ENCODE measurements at regions of chr7 and their contacts with region 1.

Region 1: DNA sequence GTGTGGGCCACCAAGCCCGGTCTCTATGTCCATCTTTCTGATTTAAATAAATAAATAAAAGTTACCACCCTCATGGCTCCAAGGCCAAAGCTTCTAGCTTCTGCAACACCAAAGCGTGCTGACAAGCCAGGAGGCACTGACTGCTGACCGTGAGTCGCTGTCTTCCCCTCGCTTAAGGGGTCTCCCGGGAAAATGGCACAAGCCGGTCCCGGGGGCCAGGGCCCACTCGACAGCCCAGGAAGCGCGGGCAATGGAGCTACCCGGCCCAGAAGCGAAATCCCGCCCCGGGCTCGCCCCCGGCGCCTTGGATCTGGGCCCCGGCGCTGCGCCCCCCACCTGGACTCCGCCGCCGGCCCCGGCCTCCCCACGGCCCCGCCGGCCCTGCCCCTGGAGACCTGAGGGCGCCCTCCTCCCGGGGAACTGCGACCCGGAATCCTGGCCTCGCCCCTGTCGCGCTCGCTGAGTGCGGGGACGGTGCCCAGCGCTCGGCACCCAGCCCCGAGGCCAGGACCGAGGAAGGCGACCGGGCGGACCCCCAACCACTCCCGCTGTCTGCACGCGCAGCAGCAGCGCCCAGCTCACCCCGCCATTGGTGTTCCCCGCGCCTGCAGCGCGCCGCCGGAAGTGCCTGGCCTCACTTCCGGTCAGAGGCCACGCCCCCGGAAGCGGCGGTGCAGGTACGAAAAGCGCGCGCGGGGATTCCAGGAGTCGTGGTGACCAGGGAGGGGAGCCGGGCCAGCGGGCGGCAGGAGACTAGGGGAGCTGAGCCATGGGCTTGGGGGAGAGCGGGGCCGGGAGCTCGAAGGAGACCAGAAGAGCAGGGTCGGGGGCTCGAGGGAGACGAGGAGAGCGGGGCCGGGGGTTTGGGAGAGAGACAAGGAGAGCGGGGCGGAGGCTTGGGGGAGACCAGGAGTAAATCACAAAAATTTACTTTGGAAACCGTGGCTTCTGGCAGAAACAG is at the starts of genes MRM2 and NUDT1:
- DNase-seq: peak; percentile 97
- H3K4me3 Mint-ChIP-seq: peak within 1 kb of the TSS; percentile 95
- H3K27ac Mint-ChIP-seq: peak within 1 kb of the TSS; percentile 71
- H3K4me1 Mint-ChIP-seq: peaks cover 8% of the 10 kb centered on the region
- H3K27me3 Mint-ChIP-seq: no peaks in the 10 kb centered on the region
- CTCF ChIP-seq: no peak
- total RNA-seq, gene MRM2: 60.1 and 64.3 TPM in 2 replicates
- total RNA-seq, gene NUDT1: 52.2 and 65.6 TPM in 2 replicates

Region 2: GRCh38 chr7:2104107-2104710 is 137.7 kb before region 1 on chr7:
- CTCF ChIA-PET with region 1: no interaction called
- intact Hi-C with region 1: no loop called
- DNase-seq: no peak
- H3K4me3 Mint-ChIP-seq: no peak overlapping the region
- H3K27ac Mint-ChIP-seq: no peak overlapping the region
- H3K4me1 Mint-ChIP-seq: no peaks in the 10 kb centered on the region
- H3K27me3 Mint-ChIP-seq: no peaks in the 10 kb centered on the region
- CTCF ChIP-seq: peak; percentile 26

Region 3: GRCh38 chr7:2195400-2196246 is 46.2 kb before region 1 on chr7:
- CTCF ChIA-PET with region 1: no interaction called
- intact Hi-C with region 1: no loop called
- DNase-seq: no peak
- H3K4me3 Mint-ChIP-seq: no peak overlapping the region
- H3K27ac Mint-ChIP-seq: no peak overlapping the region
- H3K4me1 Mint-ChIP-seq: no peaks in the 10 kb centered on the region
- H3K27me3 Mint-ChIP-seq: no peaks in the 10 kb centered on the region
- CTCF ChIP-seq: no peak

Region 4: GRCh38 chr7:2393706-2394105 is 151.8 kb after region 1 on chr7:
- CTCF ChIA-PET with region 1: no interaction called
- intact Hi-C with region 1: no loop called
- DNase-seq: no peak
- H3K4me3 Mint-ChIP-seq: no peak overlapping the region
- H3K27ac Mint-ChIP-seq: no peak overlapping the region
- H3K4me1 Mint-ChIP-seq: no peaks in the 10 kb centered on the region
- H3K27me3 Mint-ChIP-seq: no peaks in the 10 kb centered on the region
- CTCF ChIP-seq: no peak

Region 5: DNA sequence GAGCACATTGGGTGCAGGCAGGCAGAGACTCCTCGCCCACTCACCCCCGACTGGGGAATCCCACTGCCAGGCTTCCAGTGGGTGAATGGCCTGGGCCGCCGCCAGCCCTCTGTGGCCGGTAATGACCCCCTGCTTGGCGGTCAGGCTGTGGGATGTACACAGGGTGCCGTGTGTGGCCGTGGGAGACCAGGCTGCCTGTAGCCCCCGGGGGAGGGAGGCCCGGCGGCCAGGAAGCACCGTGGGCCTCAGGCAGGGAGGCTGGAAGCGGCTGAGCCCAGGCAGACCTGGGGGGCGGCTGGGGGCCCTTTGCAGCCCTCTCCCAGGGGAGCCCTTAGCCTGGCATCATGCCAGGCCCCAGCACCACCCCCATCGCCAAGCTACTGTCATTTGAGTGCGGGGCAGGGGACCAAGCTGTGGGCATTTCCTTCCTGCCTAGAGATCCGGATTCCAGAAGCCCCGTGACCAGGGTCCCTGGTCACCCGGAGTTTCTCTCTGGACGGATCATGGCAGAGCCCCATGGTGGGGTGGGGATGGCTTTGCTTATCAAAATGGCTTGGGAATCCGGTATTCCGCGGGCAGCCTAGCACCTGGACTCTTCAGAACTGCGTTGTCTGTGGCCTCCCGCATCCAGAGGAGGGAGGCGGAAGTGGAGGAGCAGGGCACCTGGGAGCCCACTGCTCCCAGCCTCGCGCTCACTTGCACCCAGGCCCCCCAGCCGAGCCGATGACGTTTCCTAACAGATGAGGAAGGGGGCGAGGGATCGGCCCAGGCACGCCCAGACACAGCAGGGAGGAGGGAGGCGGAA is 391.1 kb after region 1 on chr7:
- CTCF ChIA-PET with region 1: interaction called, 11 read pairs
- intact Hi-C with region 1: no loop called
- DNase-seq: peak; percentile 73
- H3K4me3 Mint-ChIP-seq: peak overlapping the region; percentile 99
- H3K27ac Mint-ChIP-seq: peak overlapping the region; percentile 86
- H3K4me1 Mint-ChIP-seq: peaks cover 44% of the 10 kb centered on the region
- H3K27me3 Mint-ChIP-seq: no peaks in the 10 kb centered on the region
- CTCF ChIP-seq: no peak

Measured in Calu3 (cell line).